ENCODE measurements at regions of chr9 and their contacts with region 1.

Region 1: GRCh38 chr9:84697509-84698114 is 28.1 kb downstream of the NTRK2 start:
- DNase-seq: peak; percentile 77
- ATAC-seq: no peak
- H3K4me3 Mint-ChIP-seq: no peak overlapping the region
- H3K27ac Mint-ChIP-seq: no peak overlapping the region
- H3K4me1 Mint-ChIP-seq: peaks cover 2% of the 10 kb centered on the region
- H3K27me3 Mint-ChIP-seq: peaks cover 7% of the 10 kb centered on the region

Region 2: GRCh38 chr9:84642553-84643141 is 55.0 kb before region 1 on chr9:
- CTCF ChIA-PET with region 1: no interaction called
- POLR2A ChIA-PET with region 1: no interaction called
- intact Hi-C with region 1: no loop called
- DNase-seq: no peak
- ATAC-seq: no peak
- H3K4me3 Mint-ChIP-seq: no peak overlapping the region
- H3K27ac Mint-ChIP-seq: no peak overlapping the region
- H3K4me1 Mint-ChIP-seq: no peaks in the 10 kb centered on the region
- H3K27me3 Mint-ChIP-seq: no peaks in the 10 kb centered on the region

Region 3: DNA sequence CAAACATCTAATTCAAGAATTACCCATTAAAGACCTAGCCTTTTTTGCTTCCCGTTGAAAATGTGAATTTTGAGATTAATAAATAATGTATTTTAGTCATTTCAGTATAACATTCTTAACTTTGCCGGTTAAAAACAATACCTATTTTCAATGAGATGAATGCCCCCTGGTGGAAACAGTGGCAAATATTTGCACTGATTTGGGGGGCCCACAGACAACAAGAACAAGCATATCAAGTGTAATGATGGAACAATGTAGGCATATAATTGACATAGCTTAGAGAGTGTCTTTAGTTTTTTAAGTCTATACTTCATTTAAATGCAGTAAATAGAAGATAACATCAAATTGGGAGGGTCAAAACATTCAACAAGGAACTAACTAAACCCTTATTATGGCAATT is 83.8 kb after region 1 on chr9:
- CTCF ChIA-PET with region 1: interaction called, 12 read pairs
- POLR2A ChIA-PET with region 1: no interaction called
- intact Hi-C with region 1: loop called (anchors 1 to 5 kb)
- DNase-seq: peak; percentile 15
- ATAC-seq: no peak
- H3K4me3 Mint-ChIP-seq: no peak overlapping the region
- H3K27ac Mint-ChIP-seq: no peak overlapping the region
- H3K4me1 Mint-ChIP-seq: no peaks in the 10 kb centered on the region
- H3K27me3 Mint-ChIP-seq: peaks cover 10% of the 10 kb centered on the region

Region 4: GRCh38 chr9:84953797-84954705 is 256.4 kb after region 1 on chr9:
- CTCF ChIA-PET with region 1: interaction called, 3 read pairs
- POLR2A ChIA-PET with region 1: no interaction called
- intact Hi-C with region 1: loop called (anchors 5 kb)
- DNase-seq: peak; percentile 81
- ATAC-seq: peak; percentile 96
- H3K4me3 Mint-ChIP-seq: no peak overlapping the region
- H3K27ac Mint-ChIP-seq: no peak overlapping the region
- H3K4me1 Mint-ChIP-seq: no peaks in the 10 kb centered on the region
- H3K27me3 Mint-ChIP-seq: peaks cover 15% of the 10 kb centered on the region

Region 5: DNA sequence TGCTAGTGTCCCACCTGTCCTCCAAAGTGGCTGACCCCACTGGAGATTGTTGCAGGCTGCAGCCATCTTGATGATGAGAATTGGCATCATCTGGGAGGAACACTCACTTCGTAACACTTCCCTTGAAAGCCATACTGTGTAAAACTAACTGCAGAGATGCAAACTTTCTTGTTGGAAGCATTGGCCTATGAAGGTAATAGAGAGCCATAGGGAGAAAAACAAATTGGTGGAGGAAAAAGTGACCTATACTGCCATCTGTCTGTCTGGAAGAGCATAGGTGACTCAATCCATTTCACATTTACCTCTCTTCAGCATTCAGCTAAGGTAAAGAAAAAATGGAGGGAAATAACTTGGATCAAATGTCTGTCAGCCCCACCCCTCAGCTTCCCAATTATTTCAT is 445.4 kb after region 1 on chr9:
- CTCF ChIA-PET with region 1: no interaction called
- POLR2A ChIA-PET with region 1: no interaction called
- intact Hi-C with region 1: loop called in 1 of 2 experiments (anchors 1 kb)
- DNase-seq: no peak
- ATAC-seq: no peak
- H3K4me3 Mint-ChIP-seq: no peak overlapping the region
- H3K27ac Mint-ChIP-seq: no peak overlapping the region
- H3K4me1 Mint-ChIP-seq: no peaks in the 10 kb centered on the region
- H3K27me3 Mint-ChIP-seq: peaks cover 4% of the 10 kb centered on the region

Region 6: GRCh38 chr9:85258823-85259370 is 561.3 kb after region 1 on chr9:
- CTCF ChIA-PET with region 1: no interaction called
- POLR2A ChIA-PET with region 1: no interaction called
- intact Hi-C with region 1: loop called in 1 of 2 experiments (anchors 5 kb)
- DNase-seq: peak; percentile 57
- ATAC-seq: peak; percentile 66
- H3K4me3 Mint-ChIP-seq: no peak overlapping the region
- H3K27ac Mint-ChIP-seq: no peak overlapping the region
- H3K4me1 Mint-ChIP-seq: no peaks in the 10 kb centered on the region
- H3K27me3 Mint-ChIP-seq: peaks cover 2% of the 10 kb centered on the region

Region 7: GRCh38 chr9:85425153-85425611 is 727.6 kb after region 1 on chr9:
- CTCF ChIA-PET with region 1: interaction called, 3 read pairs
- POLR2A ChIA-PET with region 1: no interaction called
- intact Hi-C with region 1: loop called in 1 of 2 experiments (anchors 1 kb)
- DNase-seq: peak; percentile 79
- ATAC-seq: peak; percentile 51
- H3K4me3 Mint-ChIP-seq: no peak overlapping the region
- H3K27ac Mint-ChIP-seq: no peak overlapping the region
- H3K4me1 Mint-ChIP-seq: peaks cover 4% of the 10 kb centered on the region
- H3K27me3 Mint-ChIP-seq: peaks cover 23% of the 10 kb centered on the region

Region 8: DNA sequence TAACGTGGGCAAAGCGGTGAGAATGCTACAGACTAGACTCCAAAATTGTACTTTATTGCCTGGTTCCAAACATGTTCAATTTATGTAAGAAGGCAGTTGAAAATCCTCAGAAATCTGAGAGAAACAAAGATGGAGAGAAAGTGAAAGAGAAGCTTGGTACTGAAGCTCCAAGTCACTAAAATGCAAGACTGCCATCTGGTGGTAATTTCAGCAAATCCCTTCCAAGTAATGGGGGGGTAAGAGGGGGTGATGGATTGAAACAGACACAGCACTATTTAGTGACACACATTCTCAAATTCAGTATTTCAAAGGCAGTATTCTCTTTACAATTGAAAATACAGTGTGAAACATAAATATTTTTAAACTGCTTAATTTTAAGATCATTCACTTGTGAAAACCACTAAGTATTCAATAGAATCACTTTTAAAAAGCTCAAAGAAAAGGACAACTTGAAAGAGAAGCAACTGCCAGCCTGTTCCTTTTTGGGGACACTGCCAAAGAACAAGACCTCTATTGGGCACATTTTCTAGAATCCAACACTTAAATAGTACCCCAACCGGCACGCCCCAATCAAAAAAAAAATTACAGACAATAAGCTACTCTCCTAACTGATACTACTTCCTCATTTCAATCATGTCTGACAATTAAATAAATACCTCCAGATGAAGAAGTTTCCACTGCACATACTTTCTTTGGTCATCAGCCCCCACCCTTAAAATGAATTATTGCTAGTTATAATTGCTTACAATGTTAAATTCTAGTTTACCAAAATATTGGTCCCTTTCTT is 912.7 kb after region 1 on chr9:
- CTCF ChIA-PET with region 1: no interaction called
- POLR2A ChIA-PET with region 1: no interaction called
- intact Hi-C with region 1: loop called in 1 of 2 experiments (anchors 10 kb)
- DNase-seq: no peak
- ATAC-seq: peak; percentile 92
- H3K4me3 Mint-ChIP-seq: peak overlapping the region; percentile 32
- H3K27ac Mint-ChIP-seq: peak overlapping the region; percentile 64
- H3K4me1 Mint-ChIP-seq: peaks cover 8% of the 10 kb centered on the region
- H3K27me3 Mint-ChIP-seq: no peaks in the 10 kb centered on the region